GM12878 (cell line): ENCODE measurements at regions of chr11 and their contacts with region 1.

Region 1: DNA sequence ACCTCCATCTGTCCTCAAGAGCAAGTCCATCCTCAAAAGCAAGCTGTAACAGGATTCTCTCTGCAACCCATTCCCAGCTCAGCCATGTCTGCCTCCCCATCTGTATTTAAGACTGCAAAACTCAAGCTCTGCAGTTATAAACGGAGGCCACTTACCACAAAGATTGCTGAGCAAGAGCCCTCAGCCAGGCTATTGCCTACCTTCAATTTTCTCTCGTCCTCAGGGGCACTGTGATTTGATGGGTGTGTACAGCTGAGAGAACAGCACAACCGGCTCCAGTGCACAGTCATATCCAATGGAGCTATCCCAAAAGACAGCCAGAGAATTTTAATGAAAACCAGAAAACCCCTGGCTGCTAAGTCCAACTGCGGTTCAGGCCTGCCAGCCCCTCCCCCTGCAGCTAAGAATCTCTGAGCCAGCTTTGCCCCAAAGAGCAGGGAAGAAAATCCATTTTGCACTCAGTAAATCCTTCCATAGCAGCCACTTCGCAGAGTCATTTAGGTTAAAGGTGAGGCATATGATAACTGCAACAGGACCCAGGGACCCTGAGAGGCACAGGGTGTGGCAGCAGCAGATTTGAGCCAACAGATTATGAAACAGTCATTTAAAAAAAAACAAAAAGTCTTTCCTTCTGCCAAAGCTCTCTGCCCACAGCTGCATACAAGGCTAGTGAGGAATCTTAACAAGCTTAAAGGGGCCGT is 37.6 kb downstream of the RAB30 start:
- DNase-seq: no peak
- ATAC-seq: peak; percentile 50
- H3K4me3 ChIP-seq: 0 out of 2 replicates have a peak overlapping the region, but pooled peaks have one; percentile 10
- H3K27ac ChIP-seq: no peak overlapping the region
- H3K4me1 ChIP-seq: peaks cover 21% of the 10 kb centered on the region
- H3K27me3 ChIP-seq: no peaks in the 10 kb centered on the region
- CTCF ChIP-seq: no peak
- EP300 ChIP-seq: no peak
- POLR2A ChIP-seq: no peak
- RAD21 ChIP-seq: no peak

Region 2: GRCh38 chr11:83019888-83020579 is 14.1 kb before region 1 on chr11:
- CTCF ChIA-PET with region 1: interaction called, 10 read pairs
- POLR2A ChIA-PET with region 1: interaction called, 5 read pairs
- RAD21 ChIA-PET with region 1: interaction called, 5 read pairs
- SMC1A ChIA-PET with region 1: interaction called, 26 read pairs
- in situ Hi-C with region 1: no loop called
- intact Hi-C with region 1: no loop called
- DNase-seq: no peak
- ATAC-seq: no peak
- H3K4me3 ChIP-seq: no peak overlapping the region
- H3K27ac ChIP-seq: no peak overlapping the region
- H3K4me1 ChIP-seq: peaks cover 16% of the 10 kb centered on the region
- H3K27me3 ChIP-seq: no peaks in the 10 kb centered on the region
- CTCF ChIP-seq: no peak
- EP300 ChIP-seq: no peak
- POLR2A ChIP-seq: no peak
- RAD21 ChIP-seq: no peak

Region 3: DNA sequence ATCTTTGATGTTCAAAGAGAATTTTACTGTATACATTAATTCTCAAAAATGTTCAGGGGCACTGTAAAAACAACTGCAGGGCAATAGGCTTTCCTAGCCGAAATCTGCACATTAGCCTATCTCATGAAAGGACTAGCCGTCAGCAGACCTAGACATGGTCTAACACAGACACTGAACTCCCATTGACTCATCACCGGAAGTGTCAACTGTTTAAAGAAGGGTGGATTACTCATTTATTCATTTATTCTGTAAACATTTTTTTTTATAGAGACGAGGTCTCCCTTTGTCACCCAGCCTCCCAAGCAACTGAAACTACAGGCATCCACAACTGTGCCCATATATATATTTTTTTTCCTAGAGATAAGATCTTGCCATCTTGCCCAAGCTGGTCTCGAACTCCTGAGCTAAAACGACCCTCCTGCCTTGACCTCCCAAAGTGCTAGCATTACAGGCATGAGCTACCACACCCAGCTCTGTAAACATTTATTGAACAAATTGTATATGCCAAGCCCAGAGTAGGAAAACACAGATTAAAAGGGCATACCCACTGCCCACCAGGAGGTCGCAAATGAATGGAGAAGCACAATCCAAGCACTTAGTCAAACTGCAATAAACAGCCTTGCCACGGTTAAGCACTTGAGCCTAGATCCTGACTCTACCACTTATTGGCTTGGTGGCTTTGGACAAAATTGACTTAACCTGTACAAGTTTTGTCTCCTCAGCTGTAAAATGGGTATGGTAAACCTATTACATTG is 11.0 kb after region 1 on chr11:
- CTCF ChIA-PET with region 1: interaction called, 25 read pairs
- POLR2A ChIA-PET with region 1: interaction called, 8 read pairs
- RAD21 ChIA-PET with region 1: interaction called, 7 read pairs
- SMC1A ChIA-PET with region 1: interaction called, 61 read pairs
- in situ Hi-C with region 1: no loop called
- intact Hi-C with region 1: no loop called
- DNase-seq: no peak
- ATAC-seq: peak; percentile 85
- H3K4me3 ChIP-seq: no peak overlapping the region
- H3K27ac ChIP-seq: no peak overlapping the region
- H3K4me1 ChIP-seq: peaks cover 8% of the 10 kb centered on the region
- H3K27me3 ChIP-seq: no peaks in the 10 kb centered on the region
- CTCF ChIP-seq: no peak
- EP300 ChIP-seq: no peak
- POLR2A ChIP-seq: no peak
- RAD21 ChIP-seq: no peak

Region 4: GRCh38 chr11:83051760-83052671 is 17.9 kb after region 1 on chr11:
- CTCF ChIA-PET with region 1: interaction called, 7 read pairs
- POLR2A ChIA-PET with region 1: interaction called, 8 read pairs
- RAD21 ChIA-PET with region 1: interaction called, 4 read pairs
- SMC1A ChIA-PET with region 1: interaction called, 61 read pairs
- in situ Hi-C with region 1: no loop called
- intact Hi-C with region 1: no loop called
- DNase-seq: no peak
- ATAC-seq: no peak
- H3K4me3 ChIP-seq: no peak overlapping the region
- H3K27ac ChIP-seq: no peak overlapping the region
- H3K4me1 ChIP-seq: peaks cover 40% of the 10 kb centered on the region
- H3K27me3 ChIP-seq: no peaks in the 10 kb centered on the region
- CTCF ChIP-seq: no peak
- EP300 ChIP-seq: no peak
- POLR2A ChIP-seq: no peak
- RAD21 ChIP-seq: no peak